Ovary (tissue), 10 donors: ENCODE measurements at regions of chr20 and their contacts with region 1.

Region 1: DNA sequence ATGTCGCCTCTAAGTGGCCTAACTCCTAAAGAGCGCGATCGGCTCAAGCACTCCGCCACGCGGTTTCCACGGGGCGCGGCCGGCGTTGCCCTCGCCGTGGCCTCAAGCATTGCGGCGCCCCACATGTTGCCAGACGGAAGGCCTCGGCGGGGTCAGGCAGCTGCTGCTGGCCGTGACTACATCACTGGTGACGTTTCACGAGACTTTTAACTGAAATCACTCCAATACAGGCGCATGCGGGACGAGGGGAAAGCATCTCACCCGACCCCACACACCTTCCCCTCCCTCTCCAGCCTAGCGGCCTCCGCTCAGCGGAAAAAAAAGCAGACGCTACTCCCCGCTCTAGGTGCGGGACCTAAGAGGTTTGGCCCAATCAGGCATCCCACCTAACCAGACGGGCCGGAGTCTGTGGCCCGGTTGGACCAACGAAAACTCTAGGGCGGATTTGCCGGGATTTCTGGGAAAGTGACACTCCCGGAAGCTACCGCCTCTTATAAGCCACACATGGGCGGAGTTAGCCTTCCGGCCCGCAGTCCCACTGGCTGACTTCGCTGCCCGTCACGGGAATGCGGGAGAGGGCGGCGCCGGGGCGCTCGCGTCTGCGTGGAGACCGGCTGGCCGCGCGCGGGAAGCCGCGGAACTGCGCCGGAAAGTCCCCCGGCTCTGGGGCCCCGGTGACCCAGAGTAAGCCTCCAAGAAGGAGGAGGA is at the start of gene NXT1:
- DNase-seq: peak; percentile 96 to 99 (median 98)
- H3K4me3 ChIP-seq: peak within 1 kb of the TSS; percentile 72
- H3K27ac ChIP-seq: peak within 1 kb of the TSS; percentile 89 to 99
- H3K4me1 ChIP-seq: peaks cover 3% of the 10 kb centered on the region
- H3K27me3 ChIP-seq: no peaks in the 10 kb centered on the region
- CTCF ChIP-seq: peak in 1 of 3 donors; percentile 4
- EP300 ChIP-seq: peak; percentile 75
- POLR2A ChIP-seq: peak; percentile 90
- total RNA-seq, gene NXT1: 19.3 to 44.6 (median 32.1) TPM

Region 2: GRCh38 chr20:23050847-23051631 is 299.3 kb before region 1 on chr20:
- intact Hi-C with region 1: loop called in 2 of 4 experiments (anchors 10 kb)
- DNase-seq: peak; percentile 67 to 82 (median 77)
- H3K4me3 ChIP-seq: peak overlapping the region; percentile 36
- H3K27ac ChIP-seq: peak overlapping the region in 1 of 2 donors; percentile 36
- H3K4me1 ChIP-seq: peaks cover 7% of the 10 kb centered on the region
- H3K27me3 ChIP-seq: no peaks in the 10 kb centered on the region
- CTCF ChIP-seq: peak; percentile 34 to 66 (median 61)
- EP300 ChIP-seq: no peak
- POLR2A ChIP-seq: no peak

Region 3: GRCh38 chr20:23420943-23421931 is 70.9 kb after region 1 on chr20 and contains the start of gene NAPB:
- intact Hi-C with region 1: loop called in 1 of 4 experiments (anchors 10 kb)
- DNase-seq: peak; percentile 91 to 96 (median 94)
- H3K4me3 ChIP-seq: peak within 1 kb of the TSS; percentile 99
- H3K27ac ChIP-seq: peak within 1 kb of the TSS; percentile 83 to 90
- H3K4me1 ChIP-seq: no peaks in the 10 kb centered on the region
- H3K27me3 ChIP-seq: no peaks in the 10 kb centered on the region
- CTCF ChIP-seq: peak; percentile 81 to 92 (median 83)
- EP300 ChIP-seq: no peak
- POLR2A ChIP-seq: peak; percentile 91
- total RNA-seq, gene NAPB: 11.8 to 17.9 (median 13.6) TPM

Region 4: DNA sequence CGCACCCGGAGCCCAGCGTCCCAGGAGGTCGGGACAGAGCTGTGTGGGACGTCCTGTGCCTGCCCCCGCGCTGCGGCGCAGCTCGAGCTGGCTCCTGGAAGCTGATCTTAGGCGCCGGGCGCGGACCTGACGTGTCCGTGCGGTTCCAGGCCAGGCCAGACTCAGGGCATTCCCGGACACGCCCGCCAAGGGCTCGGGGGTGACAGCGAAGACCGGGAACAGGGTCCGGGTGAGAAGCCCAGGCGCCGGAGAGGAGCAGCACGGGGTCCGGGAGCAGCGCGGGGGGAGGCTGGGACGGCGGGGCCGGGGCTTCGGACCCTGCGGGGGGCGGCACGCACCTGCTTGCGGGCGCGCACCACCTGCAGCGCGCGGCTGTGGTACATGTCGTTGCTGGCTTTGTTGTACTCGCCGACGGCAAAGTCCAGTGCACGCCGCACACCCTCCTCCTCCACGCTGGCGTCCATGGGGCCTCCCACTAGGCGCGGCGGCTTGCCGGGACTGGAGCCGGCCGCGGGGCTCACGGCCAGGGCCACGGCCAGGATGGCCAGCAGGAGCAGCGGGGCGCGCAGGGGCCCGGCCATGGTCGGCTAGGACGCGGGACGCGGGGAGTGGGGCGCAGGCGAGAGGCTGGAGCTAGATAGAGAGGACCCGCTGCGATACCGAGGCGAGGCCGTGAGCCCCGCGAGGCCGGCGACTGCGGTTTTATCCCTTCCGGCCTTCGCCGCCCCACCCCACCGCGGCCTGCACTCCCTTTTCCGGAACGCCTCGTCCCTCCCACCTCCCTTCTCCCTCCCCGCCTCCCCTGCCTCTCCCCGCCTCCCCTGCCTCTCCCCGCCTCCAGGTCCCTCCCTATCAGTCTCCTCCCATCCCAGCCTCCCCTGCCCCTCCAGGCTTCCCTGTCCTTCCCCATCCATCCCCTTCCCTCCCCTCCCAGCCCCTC is 287.2 kb after region 1 on chr20 and contains the start of gene CST3:
- intact Hi-C with region 1: loop called in 1 of 4 experiments (anchors 10 kb)
- DNase-seq: peak; percentile 88 to 94 (median 93)
- H3K4me3 ChIP-seq: peak within 1 kb of the TSS; percentile 97
- H3K27ac ChIP-seq: peak within 1 kb of the TSS; percentile 26 to 77
- H3K4me1 ChIP-seq: peaks cover 22% of the 10 kb centered on the region
- H3K27me3 ChIP-seq: no peaks in the 10 kb centered on the region
- CTCF ChIP-seq: no peak
- EP300 ChIP-seq: no peak
- POLR2A ChIP-seq: peak; percentile 87
- total RNA-seq, gene CST3: 317 to 889 (median 588) TPM